GM12878 (cell line): ENCODE measurements at regions of chr10 and their contacts with region 1.

Region 1: DNA sequence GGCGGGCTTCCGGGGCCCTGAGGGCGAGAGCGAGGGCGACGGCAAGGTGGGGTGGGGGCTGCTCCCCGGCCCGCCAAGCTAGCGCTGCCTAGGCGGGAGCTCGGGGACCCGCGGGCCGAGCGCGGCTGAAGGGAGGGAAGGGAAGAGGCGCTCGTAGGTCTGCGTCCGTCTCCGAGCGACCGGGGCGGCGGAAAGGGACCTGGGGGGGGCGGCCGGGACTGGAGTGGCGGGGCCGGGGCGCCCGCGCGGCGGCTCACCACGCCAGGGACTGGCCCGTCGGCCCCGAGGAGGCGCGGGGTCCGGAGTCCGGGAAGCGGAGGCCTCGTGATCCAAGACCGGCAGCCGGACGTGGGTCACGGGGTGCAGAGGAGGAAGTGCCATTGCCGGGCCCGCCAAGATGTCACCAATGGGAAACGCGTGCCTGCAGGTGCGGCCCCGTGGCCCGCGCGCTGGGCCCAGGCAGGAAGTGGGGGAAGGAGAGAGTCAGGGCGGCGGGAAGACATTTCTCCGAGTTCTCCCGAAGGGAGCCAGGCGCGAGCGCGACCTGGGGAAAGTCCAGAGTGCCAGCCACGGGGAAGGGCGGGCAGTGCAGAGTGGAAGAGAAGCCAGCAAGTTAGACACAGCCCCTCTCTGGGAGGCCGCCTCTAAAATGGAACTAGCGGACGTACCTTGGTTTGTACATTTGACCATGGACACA is 11.9 kb downstream of the HNRNPF start:
- DNase-seq: no peak
- ATAC-seq: peak; percentile 84
- H3K4me3 ChIP-seq: peak overlapping the region; percentile 66
- H3K27ac ChIP-seq: peak overlapping the region; percentile 90
- H3K4me1 ChIP-seq: peaks cover 35% of the 10 kb centered on the region
- H3K27me3 ChIP-seq: no peaks in the 10 kb centered on the region
- CTCF ChIP-seq: no peak
- EP300 ChIP-seq: no peak; a peak in 1 of 4 replicates
- POLR2A ChIP-seq: peak; percentile 82
- RAD21 ChIP-seq: no peak

Region 2: DNA sequence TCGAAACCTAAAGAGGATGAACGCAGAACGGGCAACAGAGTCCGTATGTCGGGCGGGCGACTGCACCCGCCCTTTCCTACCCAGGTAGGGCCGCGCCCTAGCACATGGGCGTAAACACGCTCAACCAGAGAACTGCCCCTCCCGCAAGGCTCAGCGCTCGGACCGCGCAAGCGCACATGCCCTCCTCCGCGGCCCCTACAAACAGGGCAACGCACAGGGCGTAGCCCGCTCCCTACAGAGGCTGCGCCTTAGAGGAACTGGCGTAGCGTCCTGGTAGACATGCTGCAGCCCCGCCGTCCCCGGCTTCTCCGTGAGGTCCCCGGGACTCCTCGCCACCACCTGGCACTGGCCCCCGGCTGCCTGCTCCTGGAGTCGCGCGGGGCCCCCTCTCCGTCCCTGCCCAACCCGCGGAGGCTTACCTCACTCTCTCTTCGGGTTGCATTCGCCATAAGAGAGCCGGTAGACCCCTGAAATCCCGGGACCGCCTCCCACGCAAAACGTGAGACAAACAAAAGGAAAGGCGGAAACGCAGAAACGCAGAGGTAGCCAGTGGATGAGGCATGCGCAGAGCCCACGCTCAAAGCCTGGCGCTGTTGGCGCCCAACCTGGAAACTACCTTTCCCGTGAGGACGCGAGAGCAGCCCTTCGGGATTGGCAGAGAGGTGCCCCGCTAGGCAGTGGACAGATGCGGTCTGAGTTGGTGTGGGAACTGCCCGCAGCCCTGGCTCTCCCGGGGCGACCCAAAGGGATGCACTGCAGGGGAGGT is 758.8 kb before region 1 on chr10 and contains the start of gene ZNF33B:
- CTCF ChIA-PET with region 1: no interaction called
- POLR2A ChIA-PET with region 1: no interaction called
- RAD21 ChIA-PET with region 1: no interaction called
- SMC1A ChIA-PET with region 1: no interaction called
- in situ Hi-C with region 1: loop called (anchors 25 kb)
- intact Hi-C with region 1: loop called (anchors 10 kb)
- DNase-seq: peak; percentile 92
- ATAC-seq: peak; percentile 98
- H3K4me3 ChIP-seq: peak within 1 kb of the TSS; percentile 89
- H3K27ac ChIP-seq: peak within 1 kb of the TSS; percentile 95
- H3K4me1 ChIP-seq: no peaks in the 10 kb centered on the region
- H3K27me3 ChIP-seq: no peaks in the 10 kb centered on the region
- CTCF ChIP-seq: no peak
- EP300 ChIP-seq: peak in 1 of 2 experiments; percentile 12; a peak in 1 of 4 replicates
- POLR2A ChIP-seq: peak; percentile 97
- RAD21 ChIP-seq: no peak
- polyA plus RNA-seq, gene ZNF33B: 5.3 to 6.2 TPM

Region 3: DNA sequence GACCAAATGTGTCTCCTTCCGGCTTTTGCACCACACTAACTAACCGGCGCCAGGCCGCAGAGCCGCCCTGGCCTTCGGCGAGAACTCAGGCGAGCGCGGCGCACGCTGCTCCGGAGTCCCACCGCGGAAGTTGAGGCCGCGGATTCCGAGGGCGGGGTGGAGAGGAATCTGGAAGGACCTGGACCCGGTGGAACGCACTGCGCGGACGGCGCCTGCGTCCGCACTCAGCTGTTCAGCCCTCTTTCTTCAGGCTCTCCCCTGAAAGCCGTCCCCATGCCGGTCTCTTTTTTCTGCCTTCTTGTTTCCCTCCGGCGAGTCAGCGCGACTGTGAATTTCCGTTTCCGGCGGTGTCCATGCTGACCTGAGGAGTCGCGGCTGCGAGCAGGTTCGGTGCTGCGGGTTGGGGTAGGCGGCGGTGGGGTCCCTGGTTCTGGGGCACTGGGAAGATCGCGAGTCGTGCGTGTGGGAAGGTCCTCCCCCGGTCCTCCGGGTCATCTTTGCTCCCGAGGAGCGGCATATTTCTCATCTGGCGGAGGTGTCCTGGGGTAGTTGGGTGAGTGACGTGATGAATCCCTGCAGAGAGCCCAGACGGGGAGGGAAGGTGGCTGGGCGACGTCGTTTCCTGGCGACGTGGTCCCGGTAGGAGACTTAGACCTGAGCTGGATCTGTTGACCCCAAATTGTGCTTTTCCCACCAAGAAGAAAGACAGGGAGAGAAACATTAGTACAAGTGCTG is 614.5 kb before region 1 on chr10 and contains the start of gene BMS1:
- CTCF ChIA-PET with region 1: no interaction called
- POLR2A ChIA-PET with region 1: no interaction called
- RAD21 ChIA-PET with region 1: no interaction called
- SMC1A ChIA-PET with region 1: no interaction called
- in situ Hi-C with region 1: loop called (anchors 25 kb)
- intact Hi-C with region 1: no loop called
- DNase-seq: peak; percentile 77
- ATAC-seq: peak; percentile 92
- H3K4me3 ChIP-seq: peak within 1 kb of the TSS; percentile 81
- H3K27ac ChIP-seq: peak within 1 kb of the TSS; percentile 87
- H3K4me1 ChIP-seq: no peaks in the 10 kb centered on the region
- H3K27me3 ChIP-seq: no peaks in the 10 kb centered on the region
- CTCF ChIP-seq: no peak
- EP300 ChIP-seq: peak in 1 of 2 experiments; percentile 48; a peak in 1 of 4 replicates
- POLR2A ChIP-seq: peak; percentile 94
- RAD21 ChIP-seq: no peak
- polyA plus RNA-seq, gene BMS1: 10.1 to 16.8 TPM

Region 4: GRCh38 chr10:43292755-43293676 is 104.1 kb before region 1 on chr10:
- CTCF ChIA-PET with region 1: interaction called, 3 read pairs
- POLR2A ChIA-PET with region 1: no interaction called
- RAD21 ChIA-PET with region 1: no interaction called
- SMC1A ChIA-PET with region 1: no interaction called
- in situ Hi-C with region 1: loop called (anchors 25 kb)
- intact Hi-C with region 1: no loop called
- DNase-seq: no peak
- ATAC-seq: peak; percentile 93
- H3K4me3 ChIP-seq: no peak overlapping the region
- H3K27ac ChIP-seq: no peak overlapping the region
- H3K4me1 ChIP-seq: no peaks in the 10 kb centered on the region; the same call in 1 of the 2 replicates
- H3K27me3 ChIP-seq: no peaks in the 10 kb centered on the region
- CTCF ChIP-seq: peak; percentile 67 to 76 (median 75)
- EP300 ChIP-seq: no peak
- POLR2A ChIP-seq: no peak
- RAD21 ChIP-seq: peak; percentile 66

Region 5: DNA sequence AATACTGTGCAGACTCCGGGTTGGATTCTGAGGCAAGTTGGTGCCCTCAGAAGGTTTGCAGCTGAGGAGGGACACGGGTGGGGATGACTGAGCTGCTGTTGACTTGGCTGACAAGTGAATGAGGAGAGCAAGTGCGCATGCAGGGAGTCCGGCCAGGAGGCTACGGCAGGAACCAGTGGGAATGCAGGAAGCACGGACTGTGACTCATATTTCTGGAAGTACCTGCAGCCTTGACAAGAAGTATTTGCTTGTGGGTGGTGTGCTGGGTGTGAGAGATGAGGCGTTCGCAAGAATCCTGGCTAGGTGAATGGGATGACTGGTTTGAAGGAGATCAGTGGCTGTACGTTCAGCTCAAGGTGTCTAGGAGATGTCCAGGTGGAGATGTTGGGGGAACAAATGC is 56.5 kb before region 1 on chr10:
- CTCF ChIA-PET with region 1: no interaction called
- POLR2A ChIA-PET with region 1: no interaction called
- RAD21 ChIA-PET with region 1: no interaction called
- SMC1A ChIA-PET with region 1: no interaction called
- in situ Hi-C with region 1: no loop called
- intact Hi-C with region 1: no loop called
- DNase-seq: no peak
- ATAC-seq: no peak
- H3K4me3 ChIP-seq: no peak overlapping the region
- H3K27ac ChIP-seq: no peak overlapping the region
- H3K4me1 ChIP-seq: no peaks in the 10 kb centered on the region
- H3K27me3 ChIP-seq: no peaks in the 10 kb centered on the region; a peak in 1 of 4 replicates
- CTCF ChIP-seq: no peak
- EP300 ChIP-seq: no peak
- POLR2A ChIP-seq: no peak
- RAD21 ChIP-seq: no peak

Region 6: GRCh38 chr10:43420369-43421200 is 23.5 kb after region 1 on chr10:
- CTCF ChIA-PET with region 1: interaction called, 3 read pairs
- POLR2A ChIA-PET with region 1: no interaction called
- RAD21 ChIA-PET with region 1: no interaction called
- SMC1A ChIA-PET with region 1: interaction called, 18 read pairs
- in situ Hi-C with region 1: no loop called
- intact Hi-C with region 1: no loop called
- DNase-seq: no peak
- ATAC-seq: peak; percentile 88
- H3K4me3 ChIP-seq: peak overlapping the region; percentile 82
- H3K27ac ChIP-seq: peak overlapping the region; percentile 64
- H3K4me1 ChIP-seq: peaks cover 21% of the 10 kb centered on the region
- H3K27me3 ChIP-seq: no peaks in the 10 kb centered on the region
- CTCF ChIP-seq: peak in 1 of 3 experiments; percentile 26; a peak in 1 of 6 replicates
- EP300 ChIP-seq: no peak
- POLR2A ChIP-seq: peak; percentile 76
- RAD21 ChIP-seq: no peak

Region 7: DNA sequence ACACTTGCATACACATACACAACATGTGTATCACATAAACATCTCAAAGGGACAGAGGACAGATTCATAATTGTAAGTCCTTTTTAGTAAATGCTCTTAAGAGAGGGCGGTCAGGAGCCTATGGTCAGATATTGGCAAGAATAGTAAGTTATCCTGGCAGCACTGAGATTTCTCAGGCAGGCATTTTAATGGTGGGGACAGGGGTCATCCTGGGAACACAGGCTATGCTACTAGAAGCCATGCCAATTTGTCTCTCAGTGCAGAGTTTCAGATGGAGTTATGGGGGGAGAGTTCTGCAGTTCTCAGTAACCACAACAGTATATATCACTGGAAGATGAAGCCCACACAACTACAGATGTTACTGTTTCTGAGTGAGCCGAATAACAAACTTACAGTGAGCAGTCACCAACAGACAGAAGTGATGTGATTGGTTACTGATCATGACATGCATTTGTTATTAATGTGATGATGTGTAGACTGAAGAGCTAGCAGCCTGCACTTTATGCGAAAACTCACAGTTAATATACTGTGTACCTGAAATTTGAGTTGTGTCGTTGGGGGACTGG is 56.3 kb after region 1 on chr10:
- CTCF ChIA-PET with region 1: interaction called, 3 read pairs
- POLR2A ChIA-PET with region 1: interaction called, 4 read pairs
- RAD21 ChIA-PET with region 1: no interaction called
- SMC1A ChIA-PET with region 1: interaction called, 10 read pairs
- in situ Hi-C with region 1: loop called (anchors 5 kb)
- intact Hi-C with region 1: no loop called
- DNase-seq: no peak
- ATAC-seq: peak; percentile 7
- H3K4me3 ChIP-seq: no peak overlapping the region
- H3K27ac ChIP-seq: peak overlapping the region; percentile 71
- H3K4me1 ChIP-seq: peaks cover 33% of the 10 kb centered on the region
- H3K27me3 ChIP-seq: no peaks in the 10 kb centered on the region
- CTCF ChIP-seq: no peak
- EP300 ChIP-seq: no peak
- POLR2A ChIP-seq: no peak
- RAD21 ChIP-seq: no peak